G401 (cell line): ENCODE measurements at regions of chr17 and their contacts with region 1.

Region 1: GRCh38 chr17:49434821-49435670 is 20.4 kb upstream of the PHB1 start:
- DNase-seq: peak; percentile 29

Region 2: DNA sequence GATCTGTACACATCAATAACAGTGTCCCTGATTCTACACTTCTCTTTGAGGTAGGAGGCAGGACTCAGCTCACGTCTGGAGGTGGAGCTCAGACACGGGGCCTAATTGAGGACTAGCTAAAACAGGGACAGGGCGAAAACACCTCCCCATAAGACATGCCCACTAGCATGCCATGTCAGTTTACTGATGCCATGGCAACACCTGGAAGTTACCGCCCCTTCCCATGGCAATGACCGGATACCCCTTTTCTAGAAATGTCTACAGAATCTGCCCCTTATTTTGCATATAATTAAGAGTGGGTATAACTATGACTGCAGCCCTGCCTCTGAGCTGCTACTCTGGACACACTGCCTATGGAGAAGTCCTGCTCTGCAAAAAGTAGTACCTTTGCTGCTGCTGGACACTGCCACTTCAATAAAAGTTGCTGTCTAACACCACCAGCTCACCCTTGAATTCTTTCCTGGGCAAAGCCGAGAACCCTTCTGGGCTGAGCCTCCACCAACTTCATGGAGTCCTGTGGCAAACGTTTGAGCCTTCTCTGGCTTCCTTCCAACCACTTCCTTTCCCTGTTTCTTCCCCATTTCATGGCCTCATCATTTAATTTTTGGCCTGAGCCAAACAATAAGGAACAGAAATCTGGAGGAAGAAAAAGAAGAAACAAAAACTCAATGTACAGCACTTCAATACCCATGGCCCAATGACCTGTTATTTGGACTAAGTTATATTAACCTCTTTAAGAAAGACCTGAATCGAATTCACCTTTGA is 41.4 kb before region 1 on chr17:
- in situ Hi-C with region 1: no loop called
- DNase-seq: no peak

Region 3: DNA sequence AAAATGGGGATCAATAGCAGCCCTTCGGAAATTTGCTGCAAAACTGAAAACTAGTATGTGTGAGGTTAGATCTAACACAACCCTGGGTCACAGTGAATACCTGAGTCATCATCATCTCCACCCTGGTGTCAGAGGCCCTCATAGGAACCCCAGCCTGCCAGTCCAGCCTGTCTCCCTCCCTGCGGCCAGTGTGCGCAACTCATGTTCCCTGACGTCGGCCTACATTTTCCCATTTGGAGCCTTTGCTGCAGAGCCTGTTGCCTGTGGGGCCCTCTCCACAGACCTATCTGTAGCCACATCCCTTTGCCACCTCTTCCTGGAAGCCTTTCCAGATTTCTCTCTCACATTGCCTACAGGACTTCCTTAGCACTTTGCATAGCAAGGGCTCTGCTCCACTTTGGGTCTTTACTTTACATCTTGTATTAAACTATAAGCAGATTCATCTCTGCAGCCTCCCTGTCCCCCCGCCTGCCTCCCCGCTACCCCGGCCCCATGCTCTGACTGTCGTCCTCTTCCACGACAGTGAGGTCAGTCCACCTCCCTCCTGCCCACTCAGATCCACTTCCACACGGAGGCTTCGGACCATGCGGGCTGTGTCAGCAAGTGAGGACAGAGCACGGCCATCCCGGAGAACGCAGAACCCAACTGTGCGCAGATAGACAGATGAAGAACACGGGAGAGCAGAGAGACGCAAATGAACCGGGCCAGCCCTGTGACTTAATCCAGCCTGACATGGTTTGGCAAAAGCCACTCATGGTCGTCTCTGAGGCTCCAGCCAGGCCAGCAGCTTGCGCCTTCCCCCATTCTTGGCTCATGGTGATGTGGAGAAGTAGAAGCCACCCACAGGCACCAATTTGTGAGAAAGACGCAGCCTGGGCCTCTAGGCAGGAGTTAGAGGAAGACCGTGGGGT is 91.0 kb after region 1 on chr17:
- in situ Hi-C with region 1: loop called (anchors 5 kb)
- DNase-seq: peak; percentile 97

Region 4: GRCh38 chr17:49616601-49617131 is 181.6 kb after region 1 on chr17:
- in situ Hi-C with region 1: no loop called
- DNase-seq: peak; percentile 80

Region 5: DNA sequence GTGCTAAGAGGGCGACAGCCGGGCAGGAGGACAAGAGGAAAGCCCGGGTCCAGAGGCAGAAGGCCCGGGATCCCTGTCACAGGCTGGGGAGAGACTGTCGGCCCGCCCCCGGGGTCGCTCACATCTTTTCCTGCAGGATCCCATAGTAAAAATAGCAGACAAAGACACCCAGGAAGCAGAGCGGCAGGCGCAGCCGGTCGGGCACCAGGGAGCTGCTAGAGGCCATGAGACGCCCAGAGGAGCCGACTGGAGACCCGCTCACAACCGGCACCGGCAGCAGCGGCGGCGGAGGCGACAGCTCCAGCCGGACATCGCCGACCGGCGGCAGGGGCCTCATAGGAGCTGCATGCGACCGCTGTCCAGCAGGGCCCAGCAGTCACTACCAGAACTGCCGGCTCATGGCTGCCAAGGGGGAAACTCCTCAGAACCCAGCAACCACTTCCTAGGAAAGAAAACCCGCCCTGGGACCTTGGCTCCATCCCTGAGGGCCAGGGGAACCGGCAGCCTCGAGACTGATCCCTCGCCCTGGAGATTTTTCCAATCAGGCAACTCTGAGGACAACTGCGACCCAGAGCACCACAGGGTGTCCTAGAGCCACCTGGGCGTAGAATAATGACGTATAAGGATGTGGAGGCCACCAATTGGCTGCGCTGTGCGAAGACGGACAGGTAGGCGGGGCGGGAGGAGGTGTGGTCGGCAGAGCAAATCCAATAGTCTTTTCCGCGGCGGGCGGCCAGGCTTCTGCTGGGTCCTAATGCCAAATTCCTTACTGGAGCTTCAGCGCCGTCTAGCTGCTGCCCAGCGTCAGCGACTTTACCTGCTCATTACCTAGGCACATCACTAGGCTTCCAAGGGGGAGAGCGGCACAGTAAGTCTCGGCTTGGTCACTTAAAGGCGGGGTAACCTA is 272.8 kb after region 1 on chr17 and contains the start of gene SLC35B1:
- in situ Hi-C with region 1: loop called (anchors 10 kb)
- DNase-seq: peak; percentile 99
- total RNA-seq, gene SLC35B1: 65.5 and 66.2 TPM in 2 replicates